ENCODE measurements at regions of chr17 and their contacts with region 1.

Region 1: GRCh38 chr17:64081802-64082799 is 47.8 kb downstream of the ERN1 start:
- DNase-seq: peak in 5 of 9 donors; percentile 21 to 36 (median 30)
- ATAC-seq: peak; percentile 81
- H3K4me3 ChIP-seq: peak overlapping the region; percentile 4
- H3K4me3 Mint-ChIP-seq: peak overlapping the region in 8 of 10 donors; percentile 49 to 84 (median 72)
- H3K27ac ChIP-seq: peak overlapping the region; percentile 37
- H3K27ac Mint-ChIP-seq: peak overlapping the region in 6 of 9 donors; percentile 52 to 91 (median 74)
- H3K4me1 ChIP-seq: peaks cover 49 to 75% of the 10 kb centered on the region in 2 donors
- H3K4me1 Mint-ChIP-seq: peaks cover 7 to 25% (median 11%) of the 10 kb centered on the region in 7 donors
- H3K27me3 ChIP-seq: no peaks in the 10 kb centered on the region
- H3K27me3 Mint-ChIP-seq: no peaks in the 10 kb centered on the region

Region 2: DNA sequence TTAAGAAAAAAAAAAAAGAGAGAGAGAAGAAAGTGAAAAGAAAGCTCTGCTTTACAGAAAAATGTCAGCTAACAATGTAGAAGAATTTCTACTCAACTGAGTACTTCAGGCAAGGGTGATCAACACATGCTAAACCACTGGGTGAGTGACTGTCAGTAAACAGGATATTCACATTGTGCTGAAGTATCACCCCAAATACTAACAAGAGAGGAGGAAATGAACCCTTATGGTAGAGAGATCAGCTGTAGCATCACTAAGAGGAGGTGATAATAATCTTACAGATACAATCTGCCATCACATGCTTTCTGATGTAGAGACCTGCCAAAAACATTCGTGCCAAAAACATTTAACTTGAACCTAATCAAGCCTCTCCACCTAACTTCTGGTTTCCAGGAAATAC is 30.9 kb before region 1 on chr17:
- CTCF ChIA-PET with region 1: no interaction called
- POLR2A ChIA-PET with region 1: interaction called, 4 read pairs
- intact Hi-C with region 1: loop called in 1 of 2 experiments (anchors 1 kb)
- DNase-seq: peak in 7 of 9 donors; percentile 58 to 86 (median 76)
- ATAC-seq: peak; percentile 99
- H3K4me3 ChIP-seq: peak overlapping the region; percentile 19
- H3K4me3 Mint-ChIP-seq: peak overlapping the region; percentile 1 to 73 (median 60)
- H3K27ac ChIP-seq: peak overlapping the region; percentile 55
- H3K27ac Mint-ChIP-seq: peak overlapping the region; percentile 86 to 97 (median 95)
- H3K4me1 ChIP-seq: peaks cover 32 to 37% of the 10 kb centered on the region in 2 donors
- H3K4me1 Mint-ChIP-seq: peaks cover 26 to 52% (median 43%) of the 10 kb centered on the region in 7 donors
- H3K27me3 ChIP-seq: no peaks in the 10 kb centered on the region
- H3K27me3 Mint-ChIP-seq: no peaks in the 10 kb centered on the region

Region 3: DNA sequence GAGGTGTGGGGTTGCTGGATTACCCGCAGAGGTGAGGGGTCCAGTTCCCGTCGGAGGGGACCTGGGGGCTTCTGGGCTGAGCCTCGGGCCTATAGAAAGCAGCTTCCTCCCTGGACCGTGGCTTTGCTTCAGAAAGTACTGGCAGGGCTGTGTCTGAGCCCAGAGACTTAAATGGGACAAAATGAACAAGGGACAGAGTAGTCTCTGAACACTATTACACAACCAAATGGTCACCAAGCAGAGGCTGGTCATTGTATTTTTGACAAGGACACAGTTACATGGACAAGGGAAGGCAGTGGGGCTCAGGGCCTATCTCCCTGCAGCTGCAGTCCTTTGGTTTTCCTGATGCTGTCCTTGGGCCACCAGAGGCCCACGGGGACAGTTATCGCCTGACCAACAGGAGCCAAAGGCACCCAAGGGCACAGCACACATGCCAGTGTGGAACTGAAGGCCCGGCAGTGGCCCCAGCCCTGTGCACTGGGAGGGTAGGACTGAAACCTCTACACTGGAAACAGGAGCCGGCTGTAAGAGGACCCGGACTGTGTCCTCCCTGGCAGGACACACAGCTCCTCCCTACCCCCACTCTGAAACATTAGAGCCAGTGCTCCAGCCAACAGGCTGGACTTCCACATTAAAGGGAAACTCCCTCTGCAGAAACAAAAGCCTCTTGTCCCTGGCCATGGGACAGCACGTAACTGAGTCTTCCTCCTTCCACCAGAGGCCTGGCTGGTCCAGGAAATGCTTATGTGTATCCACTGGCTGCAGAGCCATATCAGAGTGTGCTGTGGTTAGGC is 73.8 kb after region 1 on chr17:
- CTCF ChIA-PET with region 1: no interaction called
- POLR2A ChIA-PET with region 1: no interaction called
- intact Hi-C with region 1: no loop called
- DNase-seq: no peak
- ATAC-seq: no peak
- H3K4me3 ChIP-seq: no peak overlapping the region
- H3K4me3 Mint-ChIP-seq: no peak overlapping the region
- H3K27ac ChIP-seq: no peak overlapping the region
- H3K27ac Mint-ChIP-seq: no peak overlapping the region
- H3K4me1 ChIP-seq: no peaks in the 10 kb centered on the region
- H3K4me1 Mint-ChIP-seq: peaks cover 0 to 3% (median 0%) of the 10 kb centered on the region in 7 donors
- H3K27me3 ChIP-seq: no peaks in the 10 kb centered on the region
- H3K27me3 Mint-ChIP-seq: no peaks in the 10 kb centered on the region

Region 4: GRCh38 chr17:64315032-64315490 is 233.0 kb after region 1 on chr17:
- CTCF ChIA-PET with region 1: no interaction called
- POLR2A ChIA-PET with region 1: no interaction called
- intact Hi-C with region 1: no loop called
- DNase-seq: no peak
- ATAC-seq: no peak
- H3K4me3 ChIP-seq: no peak overlapping the region
- H3K4me3 Mint-ChIP-seq: no peak overlapping the region
- H3K27ac ChIP-seq: no peak overlapping the region
- H3K27ac Mint-ChIP-seq: no peak overlapping the region
- H3K4me1 ChIP-seq: no peaks in the 10 kb centered on the region
- H3K4me1 Mint-ChIP-seq: peaks cover 0 to 3% (median 0%) of the 10 kb centered on the region in 7 donors
- H3K27me3 ChIP-seq: no peaks in the 10 kb centered on the region
- H3K27me3 Mint-ChIP-seq: peaks cover 0 to 11% (median 0%) of the 10 kb centered on the region in 5 donors